CD4-positive, alpha-beta memory T cell (primary cell): ENCODE measurements at regions of chr1 and their contacts with region 1.

Region 1: GRCh38 chr1:185156854-185157598 is at the starts of genes SWT1 and TRMT1L:
- DNase-seq: peak; percentile 97 to 99 (median 98)
- H3K4me3 ChIP-seq: peak within 1 kb of the TSS; percentile 61 to 88
- H3K4me3 Mint-ChIP-seq: peak within 1 kb of the TSS; percentile 98 to 100 (median 99)
- H3K27ac ChIP-seq: peak within 1 kb of the TSS; percentile 97
- H3K27ac Mint-ChIP-seq: peak within 1 kb of the TSS; percentile 98 to 100 (median 99)
- H3K4me1 ChIP-seq: peaks cover 30% of the 10 kb centered on the region
- H3K4me1 Mint-ChIP-seq: peaks cover 24 to 54% (median 39%) of the 10 kb centered on the region in 4 donors
- H3K27me3 ChIP-seq: no peaks in the 10 kb centered on the region
- H3K27me3 Mint-ChIP-seq: no peaks in the 10 kb centered on the region
- total RNA-seq, gene SWT1: 9.7 to 10.6 TPM
- total RNA-seq, gene TRMT1L: 31.7 to 33.9 TPM

Region 2: DNA sequence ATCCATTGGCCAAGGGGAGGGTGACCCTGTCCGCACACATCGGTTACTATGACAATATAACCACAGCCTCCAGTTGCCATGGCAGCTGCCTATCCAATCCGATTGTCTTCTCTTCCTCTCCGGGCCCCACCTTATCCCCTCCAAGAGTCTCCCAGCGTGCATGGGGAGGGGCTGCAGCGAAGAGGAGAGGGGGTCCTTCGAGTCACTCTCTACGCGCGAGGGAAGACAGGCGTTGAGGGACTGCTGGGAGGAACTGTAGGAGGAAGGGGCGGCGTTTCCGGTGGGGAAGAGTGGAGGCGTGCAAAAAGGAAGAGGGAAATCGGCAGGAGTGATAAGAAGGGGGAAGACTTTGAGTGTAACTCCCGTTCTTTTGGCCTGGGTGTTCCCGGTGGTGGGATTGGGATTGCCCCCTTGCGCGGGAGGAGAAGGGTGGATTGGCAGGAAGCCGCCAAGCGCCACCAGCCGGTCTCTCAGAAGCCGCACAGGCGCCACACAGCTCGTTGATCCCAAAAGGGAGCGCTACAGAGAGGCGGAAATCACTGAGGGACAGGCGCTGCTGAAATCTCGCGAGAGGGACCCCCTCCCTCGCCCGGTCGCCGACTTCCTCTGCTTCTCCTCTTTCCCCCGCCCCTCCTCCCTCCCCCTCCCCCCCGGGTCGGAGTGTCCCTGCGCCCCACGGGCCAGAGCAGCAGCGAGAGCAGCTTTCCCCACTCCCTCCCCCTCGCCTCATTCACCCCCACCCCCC is 1685.1 kb before region 1 on chr1:
- CTCF ChIA-PET with region 1: no interaction called
- POLR2A ChIA-PET with region 1: no interaction called
- intact Hi-C with region 1: loop called (anchors 1 kb)
- DNase-seq: peak; percentile 96 to 99 (median 97)
- H3K4me3 ChIP-seq: peak overlapping the region; percentile 82 to 98
- H3K4me3 Mint-ChIP-seq: peak overlapping the region; percentile 90 to 99 (median 96)
- H3K27ac ChIP-seq: peak overlapping the region; percentile 91
- H3K27ac Mint-ChIP-seq: peak overlapping the region; percentile 99 to 100 (median 100)
- H3K4me1 ChIP-seq: peaks cover 39% of the 10 kb centered on the region
- H3K4me1 Mint-ChIP-seq: peaks cover 13 to 43% (median 19%) of the 10 kb centered on the region in 4 donors
- H3K27me3 ChIP-seq: no peaks in the 10 kb centered on the region
- H3K27me3 Mint-ChIP-seq: peaks cover 0 to 3% of the 10 kb centered on the region in 2 donors

Region 3: GRCh38 chr1:184754476-184755225 is 402.4 kb before region 1 on chr1 and contains the start of gene EDEM3:
- CTCF ChIA-PET with region 1: interaction called, 3 read pairs
- POLR2A ChIA-PET with region 1: interaction called, 7 read pairs
- intact Hi-C with region 1: loop called (anchors 1 kb)
- DNase-seq: peak; percentile 97 to 100 (median 99)
- H3K4me3 ChIP-seq: peak within 1 kb of the TSS; percentile 73 to 96
- H3K4me3 Mint-ChIP-seq: peak within 1 kb of the TSS; percentile 90 to 98 (median 96)
- H3K27ac ChIP-seq: peak within 1 kb of the TSS; percentile 94
- H3K27ac Mint-ChIP-seq: peak within 1 kb of the TSS; percentile 82 to 98 (median 96)
- H3K4me1 ChIP-seq: peaks cover 32% of the 10 kb centered on the region
- H3K4me1 Mint-ChIP-seq: peaks cover 33 to 57% (median 44%) of the 10 kb centered on the region in 4 donors
- H3K27me3 ChIP-seq: no peaks in the 10 kb centered on the region
- H3K27me3 Mint-ChIP-seq: no peaks in the 10 kb centered on the region
- total RNA-seq, gene EDEM3: 58.6 to 61.7 TPM

Region 4: DNA sequence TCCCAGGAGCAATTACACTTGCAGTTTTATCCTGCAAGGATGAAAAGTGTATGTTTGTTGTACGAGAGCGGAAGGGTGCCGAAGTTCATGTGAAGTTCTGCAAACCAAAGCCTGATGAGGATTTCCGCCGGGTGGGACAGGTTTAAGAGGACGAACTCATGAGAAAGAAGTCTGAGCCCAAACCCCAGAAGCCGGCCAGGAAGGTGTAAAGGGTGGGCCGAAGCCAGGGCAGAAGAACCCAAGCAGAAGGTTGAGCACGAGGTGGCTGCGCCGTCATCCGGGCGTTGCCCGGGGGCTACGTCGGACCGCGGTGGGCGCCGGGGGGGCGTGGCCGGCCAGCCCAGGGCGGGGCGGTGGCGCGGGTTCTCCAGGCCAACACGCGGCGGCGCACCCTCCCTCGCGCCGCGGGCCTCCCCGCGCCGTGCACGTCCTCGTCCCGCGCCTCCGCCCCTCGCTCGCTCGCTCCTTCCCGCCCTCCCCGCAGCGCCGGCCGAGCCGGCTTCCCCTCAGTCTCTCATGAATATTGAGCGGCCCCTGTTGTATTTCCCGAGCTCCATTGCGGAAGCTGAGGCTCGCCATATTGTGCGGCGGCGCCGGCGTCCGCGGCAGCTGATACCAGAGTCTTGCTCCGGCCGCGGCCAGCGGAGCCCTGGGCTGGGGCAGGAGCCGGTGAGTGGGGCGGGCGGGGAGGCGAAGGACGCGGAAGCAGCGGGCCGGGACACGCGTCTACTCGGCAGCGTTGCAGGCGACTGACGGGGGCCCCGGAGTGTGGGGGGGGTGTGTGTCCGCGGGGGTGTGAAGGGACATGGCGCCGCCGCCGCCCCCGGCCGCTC is 111.8 kb before region 1 on chr1 and contains the start of gene RNF2:
- CTCF ChIA-PET with region 1: interaction called, 7 read pairs
- POLR2A ChIA-PET with region 1: interaction called, 30 read pairs
- intact Hi-C with region 1: loop called (anchors 1 kb)
- DNase-seq: peak; percentile 76 to 88 (median 83)
- H3K4me3 ChIP-seq: peak within 1 kb of the TSS; percentile 72 to 78
- H3K4me3 Mint-ChIP-seq: peak within 1 kb of the TSS; percentile 94 to 99 (median 96)
- H3K27ac ChIP-seq: peak within 1 kb of the TSS; percentile 71
- H3K27ac Mint-ChIP-seq: peak within 1 kb of the TSS; percentile 88 to 98 (median 96)
- H3K4me1 ChIP-seq: peaks cover 31% of the 10 kb centered on the region
- H3K4me1 Mint-ChIP-seq: peaks cover 31 to 53% (median 43%) of the 10 kb centered on the region in 4 donors
- H3K27me3 ChIP-seq: no peaks in the 10 kb centered on the region
- H3K27me3 Mint-ChIP-seq: no peaks in the 10 kb centered on the region
- total RNA-seq, gene RNF2: 27.0 TPM

Region 5: DNA sequence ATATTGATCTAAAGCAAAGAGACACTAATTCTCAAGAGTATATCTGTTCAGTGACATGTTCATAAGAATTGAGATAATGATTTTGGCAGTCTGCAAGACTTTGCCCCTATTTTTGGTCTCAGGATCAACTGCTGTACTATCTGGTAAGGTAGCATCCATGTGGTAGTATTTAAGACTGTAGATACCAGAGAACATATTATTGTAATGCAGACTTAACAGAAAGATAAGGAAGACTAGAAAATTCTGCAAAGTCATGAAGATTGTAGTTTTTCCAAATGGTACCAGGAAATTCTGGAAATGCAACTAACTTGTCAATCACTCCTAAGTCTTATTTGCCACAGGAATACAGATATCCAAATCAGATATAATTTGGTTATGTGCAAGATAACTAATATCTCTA is 76.6 kb before region 1 on chr1:
- CTCF ChIA-PET with region 1: no interaction called
- POLR2A ChIA-PET with region 1: no interaction called
- intact Hi-C with region 1: no loop called
- DNase-seq: no peak
- H3K4me3 ChIP-seq: no peak overlapping the region
- H3K4me3 Mint-ChIP-seq: no peak overlapping the region
- H3K27ac ChIP-seq: no peak overlapping the region
- H3K27ac Mint-ChIP-seq: no peak overlapping the region
- H3K4me1 ChIP-seq: no peaks in the 10 kb centered on the region
- H3K4me1 Mint-ChIP-seq: peaks cover 23 to 67% (median 28%) of the 10 kb centered on the region in 4 donors
- H3K27me3 ChIP-seq: no peaks in the 10 kb centered on the region
- H3K27me3 Mint-ChIP-seq: no peaks in the 10 kb centered on the region

Region 6: GRCh38 chr1:185267301-185267700 is 110.3 kb after region 1 on chr1:
- CTCF ChIA-PET with region 1: no interaction called
- POLR2A ChIA-PET with region 1: no interaction called
- intact Hi-C with region 1: no loop called
- DNase-seq: no peak
- H3K4me3 ChIP-seq: no peak overlapping the region
- H3K4me3 Mint-ChIP-seq: no peak overlapping the region
- H3K27ac ChIP-seq: no peak overlapping the region
- H3K27ac Mint-ChIP-seq: no peak overlapping the region
- H3K4me1 ChIP-seq: no peaks in the 10 kb centered on the region
- H3K4me1 Mint-ChIP-seq: no peaks in the 10 kb centered on the region
- H3K27me3 ChIP-seq: no peaks in the 10 kb centered on the region
- H3K27me3 Mint-ChIP-seq: no peaks in the 10 kb centered on the region

Region 7: GRCh38 chr1:185281245-185281644 is 124.2 kb after region 1 on chr1:
- CTCF ChIA-PET with region 1: interaction called, 3 read pairs
- POLR2A ChIA-PET with region 1: interaction called, 16 read pairs
- intact Hi-C with region 1: no loop called
- DNase-seq: peak; percentile 62 to 80 (median 76)
- H3K4me3 ChIP-seq: no peak overlapping the region
- H3K4me3 Mint-ChIP-seq: peak overlapping the region; percentile 33 to 89 (median 78)
- H3K27ac ChIP-seq: peak overlapping the region; percentile 31
- H3K27ac Mint-ChIP-seq: peak overlapping the region; percentile 86 to 97 (median 95)
- H3K4me1 ChIP-seq: peaks cover 65% of the 10 kb centered on the region
- H3K4me1 Mint-ChIP-seq: peaks cover 46 to 76% (median 64%) of the 10 kb centered on the region in 4 donors
- H3K27me3 ChIP-seq: no peaks in the 10 kb centered on the region
- H3K27me3 Mint-ChIP-seq: no peaks in the 10 kb centered on the region

Region 8: DNA sequence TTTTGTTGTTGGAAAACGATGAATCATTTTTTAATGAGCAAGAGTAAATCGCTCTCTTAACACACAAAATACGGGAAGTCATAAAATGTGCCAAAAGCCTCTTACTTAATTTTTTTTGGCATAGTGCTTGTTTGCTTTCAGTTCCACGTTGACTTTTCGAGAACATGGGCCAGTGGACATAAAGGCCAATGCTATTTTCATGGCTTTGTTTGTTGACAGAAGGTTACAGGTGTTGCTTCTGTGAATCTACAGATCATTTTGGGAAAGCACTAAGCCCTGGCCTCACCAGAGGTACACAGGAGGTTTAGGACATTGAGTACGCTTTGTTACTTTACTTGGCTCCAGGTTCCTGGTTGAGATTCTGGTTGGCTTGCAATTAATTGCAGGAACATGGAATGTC is 377.8 kb after region 1 on chr1:
- CTCF ChIA-PET with region 1: no interaction called
- POLR2A ChIA-PET with region 1: no interaction called
- intact Hi-C with region 1: no loop called
- DNase-seq: no peak
- H3K4me3 ChIP-seq: no peak overlapping the region
- H3K4me3 Mint-ChIP-seq: no peak overlapping the region
- H3K27ac ChIP-seq: no peak overlapping the region
- H3K27ac Mint-ChIP-seq: no peak overlapping the region
- H3K4me1 ChIP-seq: no peaks in the 10 kb centered on the region
- H3K4me1 Mint-ChIP-seq: peaks cover 7 to 10% (median 7%) of the 10 kb centered on the region in 4 donors
- H3K27me3 ChIP-seq: no peaks in the 10 kb centered on the region
- H3K27me3 Mint-ChIP-seq: peaks cover 0 to 4% of the 10 kb centered on the region in 2 donors

Region 9: GRCh38 chr1:185694081-185694480 is 537.1 kb after region 1 on chr1:
- CTCF ChIA-PET with region 1: interaction called, 3 read pairs
- POLR2A ChIA-PET with region 1: interaction called, 3 read pairs
- intact Hi-C with region 1: loop called (anchors 2 kb)
- DNase-seq: peak in 3 of 5 donors; percentile 12 to 24 (median 17)
- H3K4me3 ChIP-seq: peak overlapping the region; percentile 4 to 53
- H3K4me3 Mint-ChIP-seq: peak overlapping the region; percentile 80 to 91 (median 86)
- H3K27ac ChIP-seq: peak overlapping the region; percentile 40
- H3K27ac Mint-ChIP-seq: peak overlapping the region; percentile 84 to 94 (median 92)
- H3K4me1 ChIP-seq: peaks cover 20% of the 10 kb centered on the region
- H3K4me1 Mint-ChIP-seq: peaks cover 13 to 19% (median 16%) of the 10 kb centered on the region in 4 donors
- H3K27me3 ChIP-seq: no peaks in the 10 kb centered on the region
- H3K27me3 Mint-ChIP-seq: peaks cover 6 to 8% of the 10 kb centered on the region in 2 donors